Activated naive CD4-positive, alpha-beta T cell treated with anti-CD3 and anti-CD28 coated beads for 36 hours (primary cell): ENCODE measurements at regions of chr14 and their contacts with region 1.

Region 1: DNA sequence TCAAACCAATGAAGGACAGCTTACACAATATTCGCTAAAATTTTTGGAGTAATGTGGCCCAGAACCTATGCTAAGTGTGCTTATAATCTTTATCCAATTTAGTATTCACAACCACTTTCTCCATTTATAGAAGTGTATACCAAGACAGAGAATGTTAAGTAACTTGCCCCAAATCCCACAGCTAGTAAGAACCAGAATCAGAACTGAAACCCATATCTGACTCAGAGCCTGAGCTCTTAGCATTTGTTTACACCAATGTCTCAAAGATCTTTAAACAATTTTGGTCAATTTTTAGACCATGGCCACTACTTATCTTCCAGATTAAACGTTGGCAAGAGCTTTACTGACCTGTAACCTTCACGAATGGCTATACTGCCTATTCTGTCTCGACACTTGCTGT is 53.0 kb downstream of the PAPLN start:
- DNase-seq: peak; percentile 42
- H3K4me3 Mint-ChIP-seq: no peak overlapping the region
- H3K27ac Mint-ChIP-seq: no peak overlapping the region
- H3K4me1 Mint-ChIP-seq: peaks cover 24% of the 10 kb centered on the region
- H3K27me3 Mint-ChIP-seq: no peaks in the 10 kb centered on the region

Region 2: DNA sequence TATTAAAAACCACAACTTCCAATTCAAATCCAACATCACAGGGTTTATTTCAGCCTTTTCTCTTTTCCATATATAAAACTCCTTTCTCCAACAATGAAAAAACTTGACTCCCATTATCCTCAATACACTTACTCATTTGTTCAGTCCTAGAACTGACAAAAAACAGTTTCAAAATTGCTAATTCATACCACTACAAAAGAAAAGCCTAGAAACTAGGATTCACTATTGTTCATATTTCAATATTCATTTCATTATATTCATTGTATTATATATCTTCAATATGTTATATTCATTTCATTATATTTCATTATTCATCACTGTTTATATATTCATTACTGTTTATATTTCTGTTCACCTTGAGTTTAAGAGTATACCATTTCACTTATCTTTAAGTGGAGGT is 82.2 kb after region 1 on chr14:
- CTCF ChIA-PET with region 1: no interaction called
- intact Hi-C with region 1: loop called (anchors 1 kb)
- DNase-seq: no peak
- H3K4me3 Mint-ChIP-seq: no peak overlapping the region
- H3K27ac Mint-ChIP-seq: no peak overlapping the region
- H3K4me1 Mint-ChIP-seq: peaks cover 8% of the 10 kb centered on the region
- H3K27me3 Mint-ChIP-seq: no peaks in the 10 kb centered on the region

Region 3: GRCh38 chr14:73463411-73463810 is 173.1 kb after region 1 on chr14:
- CTCF ChIA-PET with region 1: interaction called, 135 read pairs
- intact Hi-C with region 1: loop called (anchors 1 kb)
- DNase-seq: peak; percentile 72
- H3K4me3 Mint-ChIP-seq: peak overlapping the region; percentile 32
- H3K27ac Mint-ChIP-seq: peak overlapping the region; percentile 52
- H3K4me1 Mint-ChIP-seq: peaks cover 52% of the 10 kb centered on the region
- H3K27me3 Mint-ChIP-seq: no peaks in the 10 kb centered on the region